Calu3 (cell line): ENCODE measurements at regions of chr4 and their contacts with region 1.

Region 1: GRCh38 chr4:148216866-148217814 is 225.1 kb downstream of the NR3C2 start:
- DNase-seq: no peak
- H3K4me3 Mint-ChIP-seq: no peak overlapping the region
- H3K27ac Mint-ChIP-seq: no peak overlapping the region
- H3K4me1 Mint-ChIP-seq: peaks cover 22% of the 10 kb centered on the region
- H3K27me3 Mint-ChIP-seq: no peaks in the 10 kb centered on the region
- CTCF ChIP-seq: no peak

Region 2: DNA sequence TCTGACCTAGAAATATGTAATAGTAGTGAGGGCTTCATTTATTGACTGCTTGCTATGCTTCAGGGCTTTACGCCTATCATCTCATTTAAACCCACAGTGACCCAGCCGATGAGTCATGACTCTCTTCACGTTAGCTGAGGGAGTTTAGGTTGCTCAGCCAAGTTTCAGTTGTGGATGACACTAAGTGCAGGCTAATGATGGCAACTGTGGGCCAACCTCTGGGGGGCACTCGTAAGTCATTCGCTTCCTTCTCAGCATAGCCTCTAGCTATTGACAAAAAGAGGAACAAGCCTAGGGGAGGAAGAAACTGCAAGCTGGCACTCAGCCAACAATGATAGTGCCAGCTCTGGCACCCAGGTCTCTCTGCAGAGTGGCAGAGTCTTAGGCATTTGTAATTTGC is 160.3 kb before region 1 on chr4:
- CTCF ChIA-PET with region 1: no interaction called
- intact Hi-C with region 1: loop called (anchors 10 kb)
- DNase-seq: peak; percentile 28
- H3K4me3 Mint-ChIP-seq: no peak overlapping the region
- H3K27ac Mint-ChIP-seq: no peak overlapping the region
- H3K4me1 Mint-ChIP-seq: peaks cover 32% of the 10 kb centered on the region
- H3K27me3 Mint-ChIP-seq: no peaks in the 10 kb centered on the region
- CTCF ChIP-seq: no peak